Mammary epithelial cell (primary cell): ENCODE measurements at regions of chr2 and their contacts with region 1.

Region 1: DNA sequence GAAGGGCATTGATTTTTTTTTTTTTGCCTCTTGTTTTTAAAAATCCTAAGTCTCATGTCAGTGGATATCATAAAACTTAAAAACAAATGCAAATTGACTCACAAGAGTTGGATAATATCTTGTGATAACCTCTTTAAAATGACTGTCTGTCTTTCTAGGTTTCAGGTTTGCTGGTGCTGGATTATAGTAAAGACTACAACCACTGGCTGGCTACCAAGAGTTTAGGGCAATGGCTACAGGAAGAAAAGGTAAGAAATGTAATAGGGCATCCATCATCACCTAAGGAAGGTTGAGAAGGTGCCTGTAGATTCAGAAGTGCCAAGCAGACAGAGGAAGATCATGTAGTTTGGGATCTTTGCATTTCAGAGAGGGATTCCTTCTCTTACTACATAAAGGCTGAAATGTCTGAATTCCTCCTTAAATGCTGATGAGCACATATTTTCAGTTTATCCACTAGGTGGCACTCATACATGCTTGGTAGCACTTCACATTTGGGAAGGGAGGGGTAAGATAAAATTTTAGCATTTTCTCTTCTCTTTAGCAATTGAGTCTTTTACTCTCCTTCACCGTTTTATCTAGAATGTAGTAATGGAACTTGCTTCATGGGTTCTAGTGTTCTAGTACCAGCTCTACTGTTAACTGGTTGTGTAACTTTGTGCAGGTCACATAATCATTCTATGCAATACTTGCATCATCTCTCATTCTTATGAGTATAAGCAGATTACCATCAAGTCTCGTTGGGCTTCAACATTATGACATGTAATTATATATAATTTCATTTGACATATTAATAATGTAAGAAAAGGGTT is 21.1 kb downstream of the CPS1 start:
- DNase-seq: peak; percentile 25
- H3K4me3 ChIP-seq: no peak overlapping the region
- H3K27ac ChIP-seq: no peak overlapping the region
- H3K4me1 ChIP-seq: no peaks in the 10 kb centered on the region
- H3K27me3 ChIP-seq: no peaks in the 10 kb centered on the region
- CTCF ChIP-seq: peak; percentile 70 to 84

Region 2: DNA sequence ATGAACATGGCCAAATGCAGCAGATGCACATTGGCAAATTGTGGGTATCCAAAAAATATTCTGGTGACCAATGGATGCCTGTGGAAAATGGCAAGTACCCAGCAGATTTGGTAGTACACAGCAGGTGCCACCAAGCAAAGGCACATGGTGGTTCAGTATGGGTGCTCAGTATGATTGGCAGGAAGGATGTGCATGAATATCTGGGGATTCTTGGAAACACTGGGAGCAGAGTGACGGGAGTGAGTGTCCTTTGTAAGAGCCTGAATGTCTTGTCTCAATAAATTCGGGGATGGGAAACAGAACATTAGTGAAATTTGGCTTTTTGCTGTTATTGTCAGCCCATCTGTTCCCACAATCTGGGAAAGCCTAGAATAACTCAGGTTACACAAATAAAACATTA is 315.4 kb before region 1 on chr2:
- CTCF ChIA-PET with region 1: no interaction called
- dilution Hi-C with region 1: no loop called
- in situ Hi-C with region 1: no loop called
- intact Hi-C with region 1: no loop called
- DNase-seq: no peak
- H3K4me3 ChIP-seq: no peak overlapping the region
- H3K27ac ChIP-seq: no peak overlapping the region
- H3K4me1 ChIP-seq: no peaks in the 10 kb centered on the region
- H3K27me3 ChIP-seq: no peaks in the 10 kb centered on the region
- CTCF ChIP-seq: no peak

Region 3: DNA sequence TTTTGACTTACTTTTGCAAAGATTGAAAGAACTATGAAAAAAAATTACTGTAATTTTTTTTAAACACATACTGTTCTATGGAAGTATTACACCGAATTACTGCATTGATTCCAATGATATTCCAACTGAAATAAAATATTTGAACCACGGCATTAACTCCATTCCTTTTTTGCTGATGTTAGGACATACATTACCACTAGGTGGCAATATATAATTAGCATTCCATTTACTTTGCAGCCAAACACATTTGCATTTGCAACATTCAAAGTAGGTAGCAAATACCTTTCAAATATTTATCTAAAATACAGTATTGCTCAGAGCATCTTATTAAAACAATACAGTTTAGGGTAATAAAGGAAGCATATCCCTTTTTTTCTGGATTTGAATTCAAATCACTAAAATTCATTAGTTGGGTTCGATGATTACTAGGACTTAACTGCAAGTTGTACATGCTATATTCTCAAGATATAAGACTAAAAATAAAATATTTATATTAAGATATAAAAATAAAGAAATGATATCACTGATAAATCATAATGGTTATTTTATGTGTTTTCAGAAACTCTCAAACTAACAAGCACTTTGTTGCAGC is 132.3 kb before region 1 on chr2:
- CTCF ChIA-PET with region 1: no interaction called
- dilution Hi-C with region 1: no loop called
- in situ Hi-C with region 1: no loop called
- intact Hi-C with region 1: loop called (anchors 1 kb)
- DNase-seq: peak; percentile 8
- H3K4me3 ChIP-seq: no peak overlapping the region
- H3K27ac ChIP-seq: no peak overlapping the region
- H3K4me1 ChIP-seq: no peaks in the 10 kb centered on the region
- H3K27me3 ChIP-seq: no peaks in the 10 kb centered on the region
- CTCF ChIP-seq: peak; percentile 65 to 81

Region 4: GRCh38 chr2:210654091-210654490 is 76.6 kb after region 1 on chr2:
- CTCF ChIA-PET with region 1: no interaction called
- dilution Hi-C with region 1: no loop called
- in situ Hi-C with region 1: no loop called
- intact Hi-C with region 1: no loop called
- DNase-seq: no peak
- H3K4me3 ChIP-seq: no peak overlapping the region
- H3K27ac ChIP-seq: no peak overlapping the region
- H3K4me1 ChIP-seq: no peaks in the 10 kb centered on the region
- H3K27me3 ChIP-seq: no peaks in the 10 kb centered on the region
- CTCF ChIP-seq: no peak

Region 5: GRCh38 chr2:211035548-211036185 is 458.2 kb after region 1 on chr2:
- CTCF ChIA-PET with region 1: no interaction called
- dilution Hi-C with region 1: no loop called
- in situ Hi-C with region 1: no loop called
- intact Hi-C with region 1: no loop called
- DNase-seq: peak; percentile 29
- H3K4me3 ChIP-seq: no peak overlapping the region
- H3K27ac ChIP-seq: no peak overlapping the region
- H3K4me1 ChIP-seq: no peaks in the 10 kb centered on the region
- H3K27me3 ChIP-seq: peaks cover 5% of the 10 kb centered on the region
- CTCF ChIP-seq: peak; percentile 62 to 77